Natural killer cell (primary cell): ENCODE measurements at regions of chr17 and their contacts with region 1.

Region 1: GRCh38 chr17:7561028-7561575 is 617 bp upstream of the SENP3 start:
- DNase-seq: peak; percentile 80 to 89
- ATAC-seq: peak; percentile 69 to 86 (median 75)
- H3K4me3 ChIP-seq: peak overlapping the region; percentile 67
- H3K4me3 Mint-ChIP-seq: peak overlapping the region; percentile 98
- H3K27ac ChIP-seq: peak overlapping the region; percentile 93
- H3K27ac Mint-ChIP-seq: peak overlapping the region; percentile 97 to 99
- H3K4me1 ChIP-seq: peaks cover 53% of the 10 kb centered on the region
- H3K4me1 Mint-ChIP-seq: peaks cover 22 to 35% of the 10 kb centered on the region in 2 donors
- H3K27me3 ChIP-seq: no peaks in the 10 kb centered on the region
- H3K27me3 Mint-ChIP-seq: no peaks in the 10 kb centered on the region
- CTCF ChIP-seq: peak; percentile 75

Region 2: DNA sequence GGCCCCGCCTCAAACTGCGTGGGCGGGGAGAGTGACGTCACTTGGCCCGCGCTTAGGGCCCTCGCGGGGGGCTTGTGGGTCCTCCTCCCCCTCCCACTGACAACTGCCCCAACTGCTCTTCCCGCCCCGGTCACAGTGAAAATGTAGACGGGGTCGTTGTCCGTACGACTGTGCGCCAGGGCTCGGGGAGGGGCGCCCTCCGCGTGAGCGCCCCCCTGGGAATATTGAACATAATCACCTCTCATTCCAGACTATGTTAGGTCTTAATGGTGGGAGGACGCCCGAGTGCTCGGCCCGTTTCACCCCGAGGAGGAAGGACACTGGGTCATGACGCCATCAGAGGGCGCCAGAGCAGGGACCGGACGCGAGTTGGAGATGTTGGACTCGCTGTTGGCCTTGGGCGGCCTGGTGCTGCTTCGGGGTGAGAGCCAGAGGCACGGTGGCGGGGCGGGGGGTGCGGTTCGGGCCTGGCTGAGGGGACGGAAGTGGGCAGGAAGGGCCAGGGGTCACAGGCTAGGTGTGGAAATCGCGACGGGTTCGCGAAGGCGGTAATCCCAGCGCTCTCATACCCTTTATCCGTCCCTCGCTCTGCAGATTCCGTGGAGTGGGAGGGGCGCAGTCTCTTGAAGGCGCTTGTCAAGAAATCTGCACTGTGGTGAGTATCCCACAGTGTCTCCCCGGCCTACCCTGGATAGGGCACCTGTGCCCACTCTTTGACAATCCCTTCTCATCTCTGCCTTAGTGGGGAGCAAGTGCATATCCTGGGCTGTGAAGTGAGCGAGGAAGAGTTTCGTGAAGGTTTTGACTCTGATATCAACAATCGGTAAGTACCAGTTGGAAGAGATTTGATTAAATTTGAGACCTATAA is 308.7 kb before region 1 on chr17 and contains the start of gene ELP5:
- intact Hi-C with region 1: loop called (anchors 5 kb)
- DNase-seq: peak; percentile 89 to 93
- ATAC-seq: peak; percentile 62 to 80 (median 64)
- H3K4me3 ChIP-seq: peak within 1 kb of the TSS; percentile 67
- H3K4me3 Mint-ChIP-seq: peak within 1 kb of the TSS; percentile 92
- H3K27ac ChIP-seq: peak within 1 kb of the TSS; percentile 96
- H3K27ac Mint-ChIP-seq: peak within 1 kb of the TSS; percentile 93 to 98
- H3K4me1 ChIP-seq: peaks cover 32% of the 10 kb centered on the region
- H3K4me1 Mint-ChIP-seq: peaks cover 41 to 43% of the 10 kb centered on the region in 2 donors
- H3K27me3 ChIP-seq: no peaks in the 10 kb centered on the region
- H3K27me3 Mint-ChIP-seq: no peaks in the 10 kb centered on the region
- CTCF ChIP-seq: no peak
- total RNA-seq, gene ELP5: 30.1 to 38.5 (median 30.3) TPM

Region 3: DNA sequence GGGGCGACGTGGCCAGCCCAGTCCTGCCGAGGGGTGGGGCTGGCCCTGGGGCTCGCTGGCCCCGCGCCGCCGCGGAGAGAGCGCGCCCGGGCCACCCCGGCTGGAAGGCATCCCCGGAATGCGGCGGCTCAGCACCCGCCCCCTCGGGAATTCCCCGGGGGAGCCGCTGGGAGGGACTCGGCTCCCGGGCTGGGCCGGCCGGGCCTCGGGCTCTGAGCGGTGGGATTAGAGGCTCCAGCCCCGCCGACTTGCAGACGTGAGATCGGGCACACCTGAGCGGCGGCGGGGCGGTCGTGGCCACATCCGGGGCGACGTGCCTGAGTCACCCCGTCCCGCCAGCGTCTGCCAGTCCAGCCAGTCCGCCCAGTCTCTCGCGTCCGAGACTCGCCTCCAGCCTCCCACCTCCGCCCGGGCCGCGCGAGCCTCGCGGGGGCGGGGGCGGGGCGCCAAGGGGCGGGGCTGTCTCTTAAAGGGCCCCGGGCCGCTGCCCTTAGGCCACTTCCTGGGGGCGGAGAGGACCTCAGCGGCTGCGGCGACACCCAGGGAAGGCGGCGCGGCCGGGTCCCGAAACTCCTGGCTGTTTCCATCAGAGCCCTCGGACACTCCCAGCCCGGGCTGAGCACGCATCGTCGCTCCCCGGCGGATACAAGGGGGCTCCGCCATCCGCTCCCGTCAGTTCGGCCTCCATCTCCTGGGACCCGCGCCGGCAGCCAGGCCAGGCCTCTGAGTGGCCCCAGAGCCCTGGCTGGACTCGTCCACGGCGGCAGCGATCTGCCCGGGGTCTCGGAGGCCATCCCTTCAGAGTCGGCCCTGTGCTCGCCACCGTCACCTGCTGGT is 209.2 kb before region 1 on chr17 and contains the start of gene KCTD11:
- intact Hi-C with region 1: loop called (anchors 1 kb)
- DNase-seq: peak; percentile 79 to 83
- ATAC-seq: peak; percentile 75 to 88 (median 78)
- H3K4me3 ChIP-seq: peak within 1 kb of the TSS; percentile 84
- H3K4me3 Mint-ChIP-seq: peak within 1 kb of the TSS; percentile 97
- H3K27ac ChIP-seq: peak within 1 kb of the TSS; percentile 95
- H3K27ac Mint-ChIP-seq: peak within 1 kb of the TSS; percentile 89
- H3K4me1 ChIP-seq: peaks cover 45% of the 10 kb centered on the region
- H3K4me1 Mint-ChIP-seq: peaks cover 9 to 59% of the 10 kb centered on the region in 2 donors
- H3K27me3 ChIP-seq: no peaks in the 10 kb centered on the region
- H3K27me3 Mint-ChIP-seq: no peaks in the 10 kb centered on the region
- CTCF ChIP-seq: peak; percentile 1
- total RNA-seq, gene KCTD11: 5.6 to 9.7 (median 8.3) TPM

Region 4: GRCh38 chr17:7484067-7484918 is 76.8 kb before region 1 on chr17 and contains the start of gene POLR2A:
- intact Hi-C with region 1: loop called (anchors 2 kb)
- DNase-seq: peak; percentile 99
- ATAC-seq: peak; percentile 63 to 83 (median 66)
- H3K4me3 ChIP-seq: peak within 1 kb of the TSS; percentile 81
- H3K4me3 Mint-ChIP-seq: peak within 1 kb of the TSS; percentile 100
- H3K27ac ChIP-seq: peak within 1 kb of the TSS; percentile 96
- H3K27ac Mint-ChIP-seq: peak within 1 kb of the TSS; percentile 100
- H3K4me1 ChIP-seq: peaks cover 50% of the 10 kb centered on the region
- H3K4me1 Mint-ChIP-seq: peaks cover 72 to 84% of the 10 kb centered on the region in 2 donors
- H3K27me3 ChIP-seq: no peaks in the 10 kb centered on the region
- H3K27me3 Mint-ChIP-seq: no peaks in the 10 kb centered on the region
- CTCF ChIP-seq: no peak
- total RNA-seq, gene POLR2A: 515 to 879 (median 524) TPM

Region 5: GRCh38 chr17:7523033-7523432 is 38.1 kb before region 1 on chr17:
- intact Hi-C with region 1: loop called (anchors 2 kb)
- DNase-seq: peak in 1 of 2 donors; percentile 78
- ATAC-seq: peak in 2 of 3 donors; percentile 56 to 65
- H3K4me3 ChIP-seq: no peak overlapping the region
- H3K4me3 Mint-ChIP-seq: no peak overlapping the region
- H3K27ac ChIP-seq: no peak overlapping the region
- H3K27ac Mint-ChIP-seq: no peak overlapping the region
- H3K4me1 ChIP-seq: no peaks in the 10 kb centered on the region
- H3K4me1 Mint-ChIP-seq: peaks cover 0 to 6% of the 10 kb centered on the region in 2 donors
- H3K27me3 ChIP-seq: no peaks in the 10 kb centered on the region
- H3K27me3 Mint-ChIP-seq: no peaks in the 10 kb centered on the region
- CTCF ChIP-seq: peak; percentile 56

Region 6: DNA sequence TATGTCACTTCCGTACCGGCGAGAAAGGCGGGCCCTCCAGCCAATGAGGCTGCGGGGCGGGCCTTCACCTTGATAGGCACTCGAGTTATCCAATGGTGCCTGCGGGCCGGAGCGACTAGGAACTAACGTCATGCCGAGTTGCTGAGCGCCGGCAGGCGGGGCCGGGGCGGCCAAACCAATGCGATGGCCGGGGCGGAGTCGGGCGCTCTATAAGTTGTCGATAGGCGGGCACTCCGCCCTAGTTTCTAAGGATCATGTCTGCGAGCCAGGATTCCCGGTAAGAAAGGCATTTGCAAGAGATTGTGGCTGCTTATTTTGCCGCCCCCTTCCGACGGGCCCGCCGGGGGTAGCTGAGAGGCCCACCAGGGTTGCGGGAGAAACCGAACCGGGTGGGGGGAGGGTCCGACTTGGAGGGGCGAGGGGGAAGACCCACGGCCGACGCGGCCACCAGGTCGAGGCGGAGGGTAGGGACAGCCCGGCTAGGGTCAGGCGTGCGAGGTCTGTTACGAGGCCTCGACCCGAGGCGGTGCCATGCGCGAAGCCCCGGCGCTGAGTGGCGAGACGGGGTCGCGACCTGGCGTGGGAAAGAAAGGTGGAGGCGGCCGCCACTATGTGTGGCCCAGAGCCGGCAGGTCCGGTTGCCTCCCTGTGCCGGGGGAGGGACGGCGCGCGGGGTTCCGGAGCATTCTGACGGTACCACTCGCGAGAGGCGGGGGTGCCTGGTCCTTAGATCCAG is 11.7 kb after region 1 on chr17:
- intact Hi-C with region 1: loop called (anchors 1 kb)
- DNase-seq: peak; percentile 99 to 100
- ATAC-seq: peak; percentile 79 to 93 (median 80)
- H3K4me3 ChIP-seq: peak overlapping the region; percentile 93
- H3K4me3 Mint-ChIP-seq: peak overlapping the region; percentile 99
- H3K27ac ChIP-seq: peak overlapping the region; percentile 96
- H3K27ac Mint-ChIP-seq: peak overlapping the region; percentile 98 to 100
- H3K4me1 ChIP-seq: peaks cover 30% of the 10 kb centered on the region
- H3K4me1 Mint-ChIP-seq: peaks cover 43 to 47% of the 10 kb centered on the region in 2 donors
- H3K27me3 ChIP-seq: no peaks in the 10 kb centered on the region
- H3K27me3 Mint-ChIP-seq: no peaks in the 10 kb centered on the region
- CTCF ChIP-seq: no peak